ENCODE measurements at regions of chr22 and their contacts with region 1.

Region 1: DNA sequence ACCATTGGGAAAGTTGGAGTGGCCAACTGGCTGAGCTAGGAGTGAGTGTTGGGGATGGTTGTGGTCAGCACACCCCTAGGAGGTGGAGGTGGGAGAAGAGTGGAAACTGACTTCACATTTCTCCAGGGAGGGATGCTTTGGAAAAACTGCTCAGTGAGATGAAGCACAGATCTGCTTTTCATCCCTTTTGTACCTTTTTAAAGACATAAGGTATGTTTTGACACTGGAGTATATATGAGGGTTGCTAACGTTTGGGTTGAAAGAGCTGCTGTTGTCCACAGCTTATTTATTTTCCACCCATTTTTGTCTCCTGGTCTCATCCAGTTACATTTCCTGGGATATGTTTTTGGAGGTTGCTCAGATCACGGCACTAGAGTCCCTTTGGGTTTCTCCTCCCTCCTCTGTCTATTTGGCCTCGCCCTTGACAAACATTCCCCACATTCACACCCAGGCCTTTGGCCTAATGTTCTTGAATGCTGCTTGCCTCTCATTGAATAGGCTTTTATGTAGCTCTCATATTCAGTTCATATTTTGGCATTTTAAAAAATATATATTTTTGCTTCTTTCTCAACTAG is 8.3 kb downstream of the SREBF2 start:
- DNase-seq: no peak
- H3K4me3 Mint-ChIP-seq: no peak overlapping the region
- H3K27ac Mint-ChIP-seq: peak overlapping the region; percentile 39
- H3K4me1 Mint-ChIP-seq: peaks cover 88% of the 10 kb centered on the region
- H3K27me3 Mint-ChIP-seq: no peaks in the 10 kb centered on the region

Region 2: DNA sequence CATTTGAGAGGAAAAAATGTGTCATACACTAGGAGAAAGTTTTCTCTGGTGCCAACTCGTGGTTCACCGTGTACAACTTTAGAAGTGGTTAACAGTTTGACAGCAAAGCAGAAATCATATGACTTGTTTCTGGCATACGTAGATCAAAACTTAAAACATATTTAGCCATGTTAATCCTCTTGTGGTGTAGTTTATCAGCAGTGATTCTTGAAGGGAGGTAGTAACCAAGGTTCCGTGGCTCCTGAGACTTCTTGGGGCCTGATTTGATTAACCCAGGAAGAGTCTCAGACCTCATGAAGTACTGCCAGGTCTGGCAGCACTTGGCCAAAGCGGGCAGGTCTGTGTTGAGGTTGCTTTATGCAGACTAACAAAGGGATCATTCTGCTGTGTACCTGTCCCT is 32.2 kb after region 1 on chr22:
- CTCF ChIA-PET with region 1: interaction called, 3 read pairs
- POLR2A ChIA-PET with region 1: interaction called, 5 read pairs
- intact Hi-C with region 1: loop called (anchors 1 kb)
- DNase-seq: peak; percentile 58
- H3K4me3 Mint-ChIP-seq: peak overlapping the region; percentile 58
- H3K27ac Mint-ChIP-seq: peak overlapping the region; percentile 92
- H3K4me1 Mint-ChIP-seq: peaks cover 61% of the 10 kb centered on the region
- H3K27me3 Mint-ChIP-seq: no peaks in the 10 kb centered on the region

Measured in activated CD4-positive, alpha-beta memory T cell treated with anti-CD3 and anti-CD28 coated beads for 36 hours (primary cell).